ENCODE measurements at regions of chr19 and their contacts with region 1.

Region 1: GRCh38 chr19:13060964-13061927 is 41.4 kb downstream of the LYL1 start:
- DNase-seq: peak; percentile 69
- ATAC-seq: peak; percentile 88
- H3K4me3 ChIP-seq: no peak overlapping the region
- H3K27ac ChIP-seq: peak overlapping the region; percentile 8
- H3K4me1 ChIP-seq: peaks cover 42% of the 10 kb centered on the region
- H3K27me3 ChIP-seq: no peaks in the 10 kb centered on the region
- CTCF ChIP-seq: peak; percentile 96
- POLR2A ChIP-seq: no peak
- RAD21 ChIP-seq: peak; percentile 98

Region 2: DNA sequence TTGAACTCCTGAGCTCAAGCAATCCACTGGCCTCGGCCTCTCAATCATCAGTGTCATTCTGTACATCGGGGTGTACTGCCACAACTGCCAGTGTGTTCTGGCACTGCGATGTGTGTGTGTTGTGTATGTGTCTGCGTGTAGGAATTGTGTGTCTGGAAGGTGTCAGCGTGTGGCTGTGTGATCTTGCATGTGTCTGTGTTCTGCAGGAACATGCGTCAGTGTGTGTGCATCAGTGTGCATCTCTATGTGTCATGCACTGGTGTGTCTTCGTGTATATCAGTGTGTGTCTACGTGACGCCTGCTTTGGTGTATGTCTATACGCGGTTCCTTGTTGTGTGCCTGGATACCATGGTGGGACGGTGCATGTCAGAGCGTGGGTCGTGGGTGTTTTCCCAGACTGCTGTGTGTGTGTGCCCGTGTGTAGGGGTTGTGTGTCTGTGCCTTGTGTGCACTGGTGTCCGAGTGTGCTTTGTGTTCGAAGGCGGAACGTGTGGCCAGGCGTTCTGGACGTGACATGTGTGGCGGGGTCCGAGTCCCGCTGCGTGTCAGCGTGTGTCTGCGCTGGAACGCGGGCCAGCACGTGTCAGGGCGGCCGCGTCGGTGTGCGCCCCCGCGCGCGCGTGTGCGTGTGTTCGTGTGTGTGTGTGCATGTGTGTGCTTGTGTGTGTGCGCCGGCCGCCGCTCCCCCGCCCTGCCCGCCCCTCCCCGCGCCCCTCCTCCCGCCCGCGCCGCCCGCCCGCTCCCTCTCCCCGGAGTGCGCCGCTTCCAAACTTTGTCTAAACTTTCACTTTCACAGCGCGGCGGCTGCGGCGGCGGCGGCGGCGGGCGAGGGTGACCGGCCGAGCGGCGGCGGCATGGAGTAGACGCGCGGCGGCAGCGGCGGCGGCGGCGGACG is 66.3 kb before region 1 on chr19 and contains the start of gene NFIX:
- CTCF ChIA-PET with region 1: interaction called, 10 read pairs
- POLR2A ChIA-PET with region 1: no interaction called
- dilution Hi-C with region 1: no loop called
- in situ Hi-C with region 1: no loop called
- intact Hi-C with region 1: loop called (anchors 5 kb)
- DNase-seq: peak; percentile 39
- ATAC-seq: peak; percentile 74
- H3K4me3 ChIP-seq: peak within 1 kb of the TSS; percentile 93
- H3K27ac ChIP-seq: peak within 1 kb of the TSS; percentile 76
- H3K4me1 ChIP-seq: peaks cover 13% of the 10 kb centered on the region
- H3K27me3 ChIP-seq: no peaks in the 10 kb centered on the region
- CTCF ChIP-seq: no peak
- POLR2A ChIP-seq: no peak
- RAD21 ChIP-seq: no peak
- total RNA-seq, gene NFIX: 10.0 and 10.2 TPM in 2 replicates

Region 3: GRCh38 chr19:13022859-13023636 is 38.2 kb before region 1 on chr19:
- CTCF ChIA-PET with region 1: interaction called, 8 read pairs
- POLR2A ChIA-PET with region 1: no interaction called
- dilution Hi-C with region 1: no loop called
- in situ Hi-C with region 1: no loop called
- intact Hi-C with region 1: loop called (anchors 2 kb)
- DNase-seq: peak; percentile 95
- ATAC-seq: peak; percentile 75
- H3K4me3 ChIP-seq: peak overlapping the region; percentile 55
- H3K27ac ChIP-seq: peak overlapping the region; percentile 92
- H3K4me1 ChIP-seq: peaks cover 45% of the 10 kb centered on the region
- H3K27me3 ChIP-seq: no peaks in the 10 kb centered on the region
- CTCF ChIP-seq: no peak
- POLR2A ChIP-seq: no peak
- RAD21 ChIP-seq: no peak

Region 4: DNA sequence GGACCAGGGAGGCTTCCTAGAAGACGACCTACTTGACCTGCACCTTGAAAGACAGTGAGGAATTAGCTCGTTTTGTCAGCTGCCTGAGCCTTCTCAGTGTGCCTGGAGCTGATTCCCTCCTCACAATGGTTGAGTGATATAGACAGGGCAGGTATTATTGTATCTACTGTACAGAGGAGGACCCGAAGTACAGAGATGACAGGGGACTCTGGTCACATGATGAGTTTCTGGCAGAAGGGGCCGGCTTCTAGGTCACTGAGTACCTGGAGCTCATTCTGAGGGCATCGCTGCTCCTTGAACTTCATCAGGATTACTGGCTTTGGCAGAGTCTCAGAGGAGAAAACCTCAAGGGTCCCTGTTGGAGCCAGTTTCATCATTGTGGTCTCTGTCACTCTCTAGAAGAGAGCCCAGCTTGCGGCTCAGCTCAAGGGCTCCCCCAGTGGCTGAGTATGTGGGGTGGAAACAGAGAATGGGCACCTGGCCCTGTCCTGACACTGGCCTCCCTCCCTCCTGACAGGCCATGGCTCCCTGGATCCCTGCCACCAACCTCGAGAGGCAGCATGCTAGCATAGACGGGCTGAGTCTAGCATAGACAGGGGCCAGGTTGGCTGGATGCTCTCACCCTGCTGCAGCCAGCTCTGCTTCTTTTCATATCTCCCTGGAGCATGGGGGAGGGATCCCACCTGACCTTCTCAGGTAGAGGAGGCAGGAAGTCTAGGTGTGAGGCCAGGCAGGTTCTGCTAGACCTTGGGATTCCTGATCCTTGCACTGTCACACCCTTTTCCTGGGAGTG is 27.2 kb before region 1 on chr19:
- CTCF ChIA-PET with region 1: interaction called, 17 read pairs
- POLR2A ChIA-PET with region 1: interaction called, 4 read pairs
- dilution Hi-C with region 1: no loop called
- in situ Hi-C with region 1: no loop called
- intact Hi-C with region 1: no loop called
- DNase-seq: peak; percentile 45
- ATAC-seq: peak; percentile 38; the same call in 1 of the 2 replicates
- H3K4me3 ChIP-seq: no peak overlapping the region
- H3K27ac ChIP-seq: no peak overlapping the region
- H3K4me1 ChIP-seq: peaks cover 45% of the 10 kb centered on the region
- H3K27me3 ChIP-seq: no peaks in the 10 kb centered on the region
- CTCF ChIP-seq: peak; percentile 66
- POLR2A ChIP-seq: no peak
- RAD21 ChIP-seq: peak; percentile 61